Activated CD4-positive, alpha-beta T cell treated with anti-CD3 and anti-CD28 coated beads for 36 hours (primary cell): ENCODE measurements at regions of chrX and their contacts with region 1.

Region 1: DNA sequence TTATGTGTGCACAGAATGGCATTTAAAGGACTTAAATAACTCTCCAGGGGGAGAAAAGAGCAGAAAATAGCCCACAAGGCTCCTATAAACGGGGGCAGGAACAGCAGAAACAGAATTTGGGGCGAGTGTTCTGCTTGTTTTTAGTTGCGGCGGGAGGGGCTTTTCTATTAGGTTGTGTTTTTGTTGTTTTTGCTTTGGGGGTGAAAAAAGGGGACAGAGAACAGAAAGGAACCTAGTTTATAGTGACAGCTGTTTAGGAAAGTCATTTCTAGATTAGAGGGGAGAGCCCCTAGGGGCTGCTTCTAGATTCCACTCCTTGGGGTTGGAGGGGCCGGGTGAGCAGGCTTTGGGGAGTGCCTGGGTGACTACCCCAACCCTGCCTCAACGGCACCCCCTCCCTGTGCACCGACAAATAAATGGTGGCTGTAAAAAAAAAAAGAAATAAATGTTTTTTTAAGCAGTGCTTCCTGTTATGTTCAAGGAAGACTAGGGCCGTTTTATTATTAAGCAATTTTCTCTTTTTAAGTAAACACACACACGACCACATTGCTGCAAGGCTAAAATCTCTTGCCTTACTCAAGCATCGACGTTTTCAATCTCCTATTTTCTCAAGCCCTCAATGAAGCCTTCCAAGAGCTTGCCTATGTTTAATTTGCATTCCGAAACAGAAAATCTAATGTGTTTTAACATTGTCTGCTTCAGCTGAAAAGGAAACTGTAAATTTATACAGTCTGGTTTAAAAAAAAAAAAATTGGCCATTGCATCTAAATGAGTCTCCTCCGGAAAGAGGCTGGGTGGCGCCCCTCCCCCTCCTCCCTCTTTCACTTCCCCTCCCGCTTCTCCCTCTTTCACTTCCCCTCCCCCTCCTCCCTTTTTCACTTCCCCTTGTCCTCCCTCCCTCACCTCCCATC is 123.3 kb upstream of the TBL1X start:
- DNase-seq: peak; percentile 80
- ATAC-seq: peak; percentile 86
- H3K4me3 Mint-ChIP-seq: peak overlapping the region; percentile 48
- H3K27ac Mint-ChIP-seq: peak overlapping the region; percentile 76
- H3K4me1 Mint-ChIP-seq: peaks cover 33% of the 10 kb centered on the region
- H3K27me3 Mint-ChIP-seq: no peaks in the 10 kb centered on the region

Region 2: DNA sequence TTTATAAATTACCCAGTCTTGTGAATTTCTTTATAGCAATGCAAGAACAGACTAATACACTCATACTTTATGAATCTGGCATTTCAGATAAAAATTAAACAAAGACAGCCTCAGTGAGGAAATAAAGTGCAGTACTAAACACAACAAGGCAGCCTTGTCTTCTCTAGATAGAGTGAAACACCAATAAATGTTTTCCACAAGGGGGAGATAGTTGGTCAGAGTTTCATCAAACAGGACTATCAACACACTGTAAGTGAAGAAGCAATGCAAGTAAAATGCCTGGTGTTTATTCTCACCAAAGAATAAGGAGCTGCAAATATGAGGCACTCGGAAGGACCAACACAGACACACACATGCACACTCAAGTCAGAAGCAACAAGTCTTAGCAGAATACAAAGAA is 370.4 kb before region 1 on chrX:
- CTCF ChIA-PET with region 1: no interaction called
- POLR2A ChIA-PET with region 1: no interaction called
- intact Hi-C with region 1: loop called in 1 of 2 experiments (anchors 10 kb)
- DNase-seq: no peak
- ATAC-seq: peak; percentile 63
- H3K4me3 Mint-ChIP-seq: no peak overlapping the region
- H3K27ac Mint-ChIP-seq: no peak overlapping the region
- H3K4me1 Mint-ChIP-seq: no peaks in the 10 kb centered on the region
- H3K27me3 Mint-ChIP-seq: no peaks in the 10 kb centered on the region

Region 3: DNA sequence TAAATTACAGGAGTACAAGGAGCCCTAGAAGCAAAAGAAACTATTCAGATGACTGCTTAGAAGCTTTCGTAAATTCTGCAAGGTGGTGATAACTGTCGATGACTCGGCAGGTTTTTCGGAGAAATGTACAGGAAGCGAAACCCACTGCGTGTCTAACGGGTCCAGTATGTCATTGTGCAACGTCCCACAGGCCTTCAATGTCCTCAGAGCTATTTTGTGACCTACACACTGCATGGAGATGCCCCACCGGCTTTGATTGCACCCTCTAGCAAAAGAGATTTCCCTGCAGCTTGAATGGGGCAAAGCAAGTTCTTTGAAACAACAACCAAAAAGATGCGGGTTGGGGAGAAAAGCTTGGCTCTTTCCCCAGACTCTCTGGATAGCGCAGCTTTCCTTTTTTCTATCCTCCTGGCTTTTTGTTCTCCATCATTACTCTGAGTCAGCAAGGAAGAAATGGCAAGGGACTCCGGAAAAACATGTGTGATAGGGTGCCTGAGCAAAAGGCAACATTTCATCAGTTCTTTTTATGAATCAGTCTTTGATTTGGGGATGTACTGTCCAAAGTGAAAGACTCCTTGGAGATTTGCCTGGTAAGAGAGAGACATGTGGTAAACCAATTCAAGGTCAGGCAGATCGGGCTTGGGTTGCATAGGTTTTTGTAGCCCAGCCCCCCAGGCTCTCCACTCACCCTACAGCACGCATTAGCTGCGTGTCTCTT is 11.3 kb after region 1 on chrX:
- CTCF ChIA-PET with region 1: no interaction called
- POLR2A ChIA-PET with region 1: no interaction called
- intact Hi-C with region 1: loop called in 1 of 2 experiments (anchors 1 kb)
- DNase-seq: peak; percentile 64
- ATAC-seq: peak; percentile 47
- H3K4me3 Mint-ChIP-seq: peak overlapping the region; percentile 23
- H3K27ac Mint-ChIP-seq: peak overlapping the region; percentile 77
- H3K4me1 Mint-ChIP-seq: peaks cover 31% of the 10 kb centered on the region
- H3K27me3 Mint-ChIP-seq: no peaks in the 10 kb centered on the region

Region 4: DNA sequence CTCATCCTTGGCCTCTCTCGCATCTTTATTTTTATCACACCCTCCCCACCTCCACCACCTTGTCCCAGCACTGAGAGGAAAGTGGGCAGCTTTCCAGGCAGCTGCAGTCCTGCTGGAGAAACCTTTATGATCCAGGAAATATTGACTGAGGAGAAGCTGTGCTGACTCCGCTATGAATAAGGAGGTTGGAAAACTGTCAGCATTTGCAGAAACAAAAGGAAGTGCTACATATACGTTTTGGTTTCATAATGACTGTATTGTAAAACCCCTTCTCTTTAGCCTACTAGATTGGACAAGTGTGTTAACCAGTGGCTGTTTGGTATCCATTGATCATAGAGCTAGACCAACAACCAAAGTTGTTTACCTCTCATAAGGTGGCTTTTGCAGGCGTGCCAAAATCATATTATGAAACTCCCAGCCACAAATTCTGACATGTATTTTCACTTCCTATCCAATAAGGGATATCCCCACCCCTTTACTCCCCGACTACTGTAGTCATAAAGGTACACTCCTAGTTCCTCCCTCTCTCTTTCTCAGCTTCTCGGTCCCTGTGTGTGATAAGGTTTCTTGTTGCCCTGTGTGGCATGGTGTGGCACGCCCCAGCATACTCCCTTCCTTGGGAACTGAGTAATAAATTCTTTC is 335.7 kb after region 1 on chrX:
- CTCF ChIA-PET with region 1: no interaction called
- POLR2A ChIA-PET with region 1: no interaction called
- intact Hi-C with region 1: loop called in 1 of 2 experiments (anchors 5 kb)
- DNase-seq: peak; percentile 34
- ATAC-seq: peak; percentile 99
- H3K4me3 Mint-ChIP-seq: no peak overlapping the region
- H3K27ac Mint-ChIP-seq: peak overlapping the region; percentile 19
- H3K4me1 Mint-ChIP-seq: peaks cover 22% of the 10 kb centered on the region
- H3K27me3 Mint-ChIP-seq: no peaks in the 10 kb centered on the region

Region 5: DNA sequence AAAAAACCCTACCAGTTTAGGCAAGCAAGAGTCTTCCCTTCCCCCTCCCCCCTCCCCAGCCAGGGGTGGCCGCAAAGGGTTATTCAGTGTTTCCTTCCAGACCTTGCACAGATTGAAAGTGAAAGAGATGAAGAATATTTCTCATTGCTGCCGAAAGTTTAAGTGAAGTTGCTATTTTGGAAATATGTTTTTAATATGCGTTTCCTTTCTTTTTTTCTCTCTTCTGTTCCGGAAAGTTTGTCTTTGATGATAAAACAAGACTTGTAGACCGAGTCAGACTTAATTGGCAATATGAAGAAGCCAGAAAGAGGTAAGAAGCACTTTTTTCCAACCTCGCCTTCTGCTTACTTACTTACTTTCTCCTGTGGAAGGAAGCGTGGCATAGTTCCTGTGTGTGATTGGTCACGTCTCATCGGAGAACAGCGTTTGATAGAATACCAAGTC is 756.7 kb after region 1 on chrX:
- CTCF ChIA-PET with region 1: no interaction called
- POLR2A ChIA-PET with region 1: no interaction called
- intact Hi-C with region 1: loop called in 1 of 2 experiments (anchors 10 kb)
- DNase-seq: peak; percentile 81
- ATAC-seq: peak; percentile 71
- H3K4me3 Mint-ChIP-seq: peak overlapping the region; percentile 67
- H3K27ac Mint-ChIP-seq: peak overlapping the region; percentile 94
- H3K4me1 Mint-ChIP-seq: peaks cover 49% of the 10 kb centered on the region
- H3K27me3 Mint-ChIP-seq: no peaks in the 10 kb centered on the region